Activated CD4-positive, alpha-beta memory T cell treated with anti-CD3 and anti-CD28 coated beads, Interleukin-2, amount 10 ng/mL, durations not matched to agents 7 days and 5 days (primary cell): ENCODE measurements at regions of chr18 and their contacts with region 1.

Region 1: GRCh38 chr18:3129053-3129864 is 90.5 kb downstream of the MYOM1 start:
- DNase-seq: peak; percentile 84
- H3K4me3 Mint-ChIP-seq: no peak overlapping the region
- H3K27ac Mint-ChIP-seq: no peak overlapping the region
- H3K4me1 Mint-ChIP-seq: peaks cover 9% of the 10 kb centered on the region
- H3K27me3 Mint-ChIP-seq: peaks cover 2% of the 10 kb centered on the region

Region 2: GRCh38 chr18:2932247-2933181 is 196.7 kb before region 1 on chr18:
- CTCF ChIA-PET with region 1: interaction called, 11 read pairs
- POLR2A ChIA-PET with region 1: interaction called, 6 read pairs
- DNase-seq: peak; percentile 36
- H3K4me3 Mint-ChIP-seq: no peak overlapping the region
- H3K27ac Mint-ChIP-seq: peak overlapping the region; percentile 20
- H3K4me1 Mint-ChIP-seq: peaks cover 28% of the 10 kb centered on the region
- H3K27me3 Mint-ChIP-seq: no peaks in the 10 kb centered on the region

Region 3: GRCh38 chr18:3027370-3027891 is 101.8 kb before region 1 on chr18:
- CTCF ChIA-PET with region 1: no interaction called
- POLR2A ChIA-PET with region 1: no interaction called
- DNase-seq: no peak
- H3K4me3 Mint-ChIP-seq: no peak overlapping the region
- H3K27ac Mint-ChIP-seq: no peak overlapping the region
- H3K4me1 Mint-ChIP-seq: no peaks in the 10 kb centered on the region
- H3K27me3 Mint-ChIP-seq: no peaks in the 10 kb centered on the region

Region 4: GRCh38 chr18:3074087-3074486 is 55.2 kb before region 1 on chr18:
- CTCF ChIA-PET with region 1: interaction called, 10 read pairs
- POLR2A ChIA-PET with region 1: no interaction called
- DNase-seq: no peak
- H3K4me3 Mint-ChIP-seq: no peak overlapping the region
- H3K27ac Mint-ChIP-seq: no peak overlapping the region
- H3K4me1 Mint-ChIP-seq: peaks cover 3% of the 10 kb centered on the region
- H3K27me3 Mint-ChIP-seq: no peaks in the 10 kb centered on the region

Region 5: GRCh38 chr18:3088449-3088848 is 40.8 kb before region 1 on chr18:
- CTCF ChIA-PET with region 1: interaction called, 10 read pairs
- POLR2A ChIA-PET with region 1: no interaction called
- DNase-seq: no peak
- H3K4me3 Mint-ChIP-seq: no peak overlapping the region
- H3K27ac Mint-ChIP-seq: no peak overlapping the region
- H3K4me1 Mint-ChIP-seq: peaks cover 6% of the 10 kb centered on the region
- H3K27me3 Mint-ChIP-seq: peaks cover 2% of the 10 kb centered on the region

Region 6: DNA sequence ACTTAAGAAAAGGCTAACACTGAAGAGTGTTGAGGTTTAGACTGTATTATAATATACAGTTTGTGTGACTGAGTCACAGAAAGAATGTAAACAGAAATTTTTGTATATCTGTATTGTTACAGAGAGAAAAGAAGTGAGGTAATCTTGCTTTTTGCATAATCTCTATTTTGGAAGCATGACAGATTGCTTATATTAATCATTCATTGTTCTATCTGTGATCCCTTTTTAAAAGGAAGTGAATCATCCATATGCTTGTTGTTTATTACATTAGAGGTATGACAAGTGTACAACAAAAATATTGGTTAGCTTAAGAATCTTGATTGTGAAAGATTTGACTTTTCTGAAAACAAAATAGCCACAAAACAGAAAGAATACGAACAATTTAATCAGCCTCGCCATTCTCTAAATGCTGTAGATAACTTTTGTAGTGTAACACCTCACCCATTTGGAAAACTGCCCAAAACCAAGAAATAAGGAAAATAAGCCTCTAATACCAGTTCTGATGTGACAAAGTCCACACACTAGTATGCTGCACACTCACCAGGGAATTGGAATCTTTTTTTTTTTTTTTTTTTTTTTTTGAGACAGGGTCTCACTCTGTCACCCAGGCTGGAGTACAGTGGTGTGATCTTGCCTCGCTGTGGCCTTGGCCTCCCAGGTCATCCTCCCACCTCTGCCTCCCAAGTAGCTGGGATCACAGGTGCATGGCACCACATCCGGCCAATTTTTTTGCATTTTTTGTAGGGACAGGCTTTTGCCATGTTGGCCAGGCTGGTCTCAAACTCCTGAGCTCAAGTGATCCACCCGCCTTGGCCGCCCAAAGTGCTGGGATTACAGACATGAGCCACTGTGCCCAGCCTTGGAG is 24.8 kb before region 1 on chr18:
- CTCF ChIA-PET with region 1: interaction called, 10 read pairs
- POLR2A ChIA-PET with region 1: no interaction called
- DNase-seq: no peak
- H3K4me3 Mint-ChIP-seq: no peak overlapping the region
- H3K27ac Mint-ChIP-seq: no peak overlapping the region
- H3K4me1 Mint-ChIP-seq: no peaks in the 10 kb centered on the region
- H3K27me3 Mint-ChIP-seq: no peaks in the 10 kb centered on the region

Region 7: GRCh38 chr18:3111523-3112245 is 17.6 kb before region 1 on chr18:
- CTCF ChIA-PET with region 1: interaction called, 23 read pairs
- POLR2A ChIA-PET with region 1: no interaction called
- DNase-seq: no peak
- H3K4me3 Mint-ChIP-seq: no peak overlapping the region
- H3K27ac Mint-ChIP-seq: no peak overlapping the region
- H3K4me1 Mint-ChIP-seq: no peaks in the 10 kb centered on the region
- H3K27me3 Mint-ChIP-seq: no peaks in the 10 kb centered on the region

Region 8: DNA sequence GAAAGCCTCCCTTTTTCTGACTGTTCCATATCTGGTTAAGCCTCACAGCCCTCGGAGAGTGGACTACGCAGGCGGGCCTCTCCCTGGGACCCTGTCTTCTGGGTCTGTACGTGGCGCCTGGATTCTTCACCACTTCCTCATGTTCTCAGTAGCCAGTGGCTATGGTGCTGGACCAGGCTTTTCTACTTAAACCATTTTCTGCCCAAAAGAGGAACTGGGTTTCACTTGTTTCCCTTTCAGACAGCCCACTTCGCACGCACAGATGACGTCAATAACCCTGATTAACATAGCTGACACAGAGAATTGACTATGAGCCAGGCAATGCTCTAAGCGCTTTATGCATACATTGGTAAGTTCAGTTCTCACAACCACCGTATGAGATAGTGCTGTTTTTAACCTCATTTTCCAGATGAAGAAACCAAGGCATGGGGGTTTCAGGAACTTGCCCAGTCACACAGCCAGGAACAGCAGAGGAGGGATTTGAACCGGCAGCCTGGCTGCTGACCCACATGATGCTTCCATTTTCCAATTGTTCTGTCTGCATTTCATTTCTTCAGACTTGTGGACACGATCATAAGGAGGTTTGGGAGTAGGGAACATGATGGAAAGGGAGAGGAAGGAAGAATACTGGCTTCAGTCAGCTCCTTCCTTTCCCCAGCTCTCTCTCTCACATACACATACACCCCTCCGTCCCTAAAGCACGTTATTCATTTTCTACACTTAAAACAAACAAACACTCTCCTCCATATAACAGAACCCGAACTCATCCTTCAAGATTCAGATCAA is 48.8 kb after region 1 on chr18:
- CTCF ChIA-PET with region 1: no interaction called
- POLR2A ChIA-PET with region 1: no interaction called
- DNase-seq: peak; percentile 20
- H3K4me3 Mint-ChIP-seq: no peak overlapping the region
- H3K27ac Mint-ChIP-seq: no peak overlapping the region
- H3K4me1 Mint-ChIP-seq: peaks cover 3% of the 10 kb centered on the region
- H3K27me3 Mint-ChIP-seq: no peaks in the 10 kb centered on the region